Endothelial cell of umbilical vein (primary cell): ENCODE measurements at regions of chr5 and their contacts with region 1.

Region 1: DNA sequence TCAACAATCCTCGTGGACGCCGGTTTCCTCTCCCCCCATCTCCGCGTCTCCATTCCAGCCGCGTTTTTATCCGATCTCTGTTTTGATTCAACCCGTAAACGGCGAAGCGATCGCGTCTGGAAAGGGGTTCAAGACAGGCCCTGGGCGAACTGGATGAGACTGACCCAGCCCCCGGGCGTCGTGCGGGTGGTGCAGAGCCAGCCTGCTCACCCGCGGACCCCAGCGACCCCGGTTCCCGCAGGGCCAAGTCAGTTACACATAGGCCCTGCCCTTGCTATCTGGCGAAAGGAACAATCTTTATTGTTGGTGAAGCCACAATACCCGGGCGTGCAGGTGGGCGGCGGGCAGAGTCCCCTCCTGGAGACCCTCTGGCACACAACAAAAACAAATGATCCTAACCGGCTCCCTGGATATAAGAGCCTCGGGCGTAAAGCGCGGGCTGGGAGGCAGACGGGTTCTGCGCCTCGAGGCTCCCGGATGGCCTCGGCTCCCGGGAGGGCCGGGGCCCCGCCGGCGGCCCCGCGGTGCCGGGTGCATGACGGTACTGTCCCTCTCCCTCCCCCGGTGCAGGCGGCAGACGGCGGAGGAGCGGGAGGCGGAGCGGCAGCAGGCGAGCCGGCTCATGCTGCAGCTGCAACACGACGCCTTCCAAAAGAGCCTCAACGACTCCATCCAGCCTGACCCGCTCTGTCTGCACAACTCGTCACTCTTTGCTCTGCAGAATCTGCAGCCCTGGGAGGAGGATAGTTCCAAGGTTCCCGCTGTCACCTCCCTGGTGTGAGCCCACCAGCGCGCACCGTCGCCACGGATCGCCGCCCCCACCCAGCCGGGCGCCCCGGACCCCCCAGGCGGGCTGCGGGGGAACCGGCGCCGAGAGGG is 2.0 kb downstream of the TLX3 start:
- DNase-seq: peak; percentile 17
- H3K4me3 ChIP-seq: no peak overlapping the region
- H3K27ac ChIP-seq: no peak overlapping the region
- H3K4me1 ChIP-seq: peaks cover 2% of the 10 kb centered on the region
- H3K27me3 ChIP-seq: peaks cover 86 to 98% of the 10 kb centered on the region in 2 experiments
- CTCF ChIP-seq: no peak
- POLR2A ChIP-seq: no peak

Region 2: DNA sequence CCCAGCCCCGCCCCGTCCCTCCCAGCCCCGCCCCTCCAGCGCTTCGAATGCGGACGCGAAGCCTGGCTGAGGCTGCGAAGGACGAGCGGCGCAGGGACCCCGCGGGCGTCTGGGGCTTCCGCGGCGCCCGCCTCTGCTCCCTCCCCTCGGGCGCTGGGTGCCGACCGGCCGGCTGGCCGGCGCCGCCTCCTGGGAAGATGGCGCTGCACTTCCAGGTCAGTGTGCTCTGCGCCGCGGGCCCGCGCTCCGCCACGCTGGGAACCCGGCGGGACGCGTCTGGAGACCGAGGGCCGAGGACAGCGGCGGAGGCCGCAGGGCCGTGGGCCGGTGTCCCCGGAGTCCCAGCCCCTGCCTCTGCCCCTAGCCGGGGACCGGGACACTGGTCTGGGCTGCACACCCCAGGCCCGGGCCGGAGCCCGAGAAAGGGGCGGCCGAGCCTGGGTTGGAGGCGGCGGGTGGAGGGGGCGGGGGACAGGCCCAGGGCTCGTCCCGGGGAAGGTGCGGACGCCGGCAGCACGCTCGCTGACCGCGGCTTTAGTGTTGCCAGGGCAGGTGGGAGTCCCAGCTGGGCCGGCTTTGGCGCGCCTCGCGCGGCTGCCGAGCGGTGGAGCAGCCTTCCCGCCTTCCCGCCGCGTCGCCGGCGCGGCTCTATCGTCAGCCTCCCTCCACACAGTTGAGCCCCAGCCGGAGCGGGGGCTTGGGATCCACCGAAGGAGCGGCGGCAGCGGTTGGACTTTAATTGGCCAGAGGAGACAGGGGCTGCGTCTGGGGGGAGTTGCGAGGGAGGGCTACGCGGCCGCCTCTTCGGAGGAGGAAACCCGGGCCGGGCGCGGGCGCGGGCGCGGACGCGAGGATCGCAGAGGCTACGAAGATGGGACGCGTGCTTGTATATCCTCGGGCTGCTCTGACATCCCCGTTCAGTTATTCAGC is 449.0 kb before region 1 on chr5 and contains the start of gene RANBP17:
- CTCF ChIA-PET with region 1: no interaction called
- POLR2A ChIA-PET with region 1: no interaction called
- dilution Hi-C with region 1: no loop called
- intact Hi-C with region 1: loop called (anchors 10 kb)
- DNase-seq: peak; percentile 66
- H3K4me3 ChIP-seq: peak within 1 kb of the TSS; percentile 33 to 90 (median 60)
- H3K27ac ChIP-seq: peak within 1 kb of the TSS; percentile 15
- H3K4me1 ChIP-seq: peaks cover 5% of the 10 kb centered on the region
- H3K27me3 ChIP-seq: no peaks in the 10 kb centered on the region
- CTCF ChIP-seq: no peak
- POLR2A ChIP-seq: peak; percentile 58
- total RNA-seq, gene RANBP17: 13.6 and 17.1 TPM in 2 replicates